Activated CD4-positive, alpha-beta memory T cell treated with anti-CD3 and anti-CD28 coated beads for 36 hours (primary cell): ENCODE measurements at regions of chr14 and their contacts with region 1.

Region 1: GRCh38 chr14:102316743-102317563 is 2.6 kb upstream of the ZNF839 start:
- DNase-seq: peak; percentile 98
- H3K4me3 Mint-ChIP-seq: peak overlapping the region; percentile 87
- H3K27ac Mint-ChIP-seq: peak overlapping the region; percentile 87
- H3K4me1 Mint-ChIP-seq: peaks cover 54% of the 10 kb centered on the region
- H3K27me3 Mint-ChIP-seq: no peaks in the 10 kb centered on the region

Region 2: GRCh38 chr14:101707068-101707842 is 609.7 kb before region 1 on chr14:
- CTCF ChIA-PET with region 1: interaction called, 4 read pairs
- POLR2A ChIA-PET with region 1: no interaction called
- intact Hi-C with region 1: loop called (anchors 5 kb)
- DNase-seq: peak; percentile 65
- H3K4me3 Mint-ChIP-seq: peak overlapping the region; percentile 51
- H3K27ac Mint-ChIP-seq: peak overlapping the region; percentile 84
- H3K4me1 Mint-ChIP-seq: peaks cover 30% of the 10 kb centered on the region
- H3K27me3 Mint-ChIP-seq: no peaks in the 10 kb centered on the region

Region 3: DNA sequence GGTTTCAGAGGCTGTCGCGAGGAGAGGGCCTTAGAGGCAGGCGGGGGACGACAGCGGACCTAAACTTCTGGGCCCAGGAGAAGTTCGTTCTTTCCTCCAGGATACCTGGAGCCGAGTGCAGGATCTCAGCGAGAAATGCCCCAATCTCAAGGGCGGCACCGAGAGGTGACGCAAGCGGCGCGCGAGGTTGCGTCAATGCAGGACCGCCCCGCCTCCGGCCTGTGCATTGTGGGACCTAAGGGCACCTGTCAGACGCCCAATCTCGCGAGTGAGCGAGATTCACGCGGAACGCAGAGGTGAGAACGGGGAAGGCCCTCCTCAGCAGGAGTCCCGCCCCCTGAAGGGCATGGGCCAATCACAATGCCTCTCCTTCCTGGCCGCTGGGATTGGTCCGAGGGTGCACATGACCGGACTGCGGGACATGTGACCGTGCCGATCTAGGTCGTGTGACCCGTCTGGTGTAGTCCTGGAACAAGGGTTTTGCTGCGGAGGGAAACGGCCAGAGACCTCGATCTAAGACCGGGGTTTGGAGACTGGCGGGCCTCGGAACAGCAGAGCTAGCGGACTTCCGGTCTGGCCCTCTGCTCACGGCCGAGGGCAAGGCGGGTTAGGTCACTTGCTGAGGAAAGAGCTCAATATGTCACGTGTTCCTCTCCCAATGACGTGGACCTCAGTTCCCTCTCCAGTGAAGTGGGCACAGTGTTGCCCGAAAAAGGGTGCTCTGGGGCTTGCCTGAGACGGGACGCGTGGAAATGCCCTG is 368.9 kb before region 1 on chr14:
- CTCF ChIA-PET with region 1: no interaction called
- POLR2A ChIA-PET with region 1: no interaction called
- intact Hi-C with region 1: loop called (anchors 1 kb)
- DNase-seq: peak; percentile 100
- H3K4me3 Mint-ChIP-seq: peak overlapping the region; percentile 92
- H3K27ac Mint-ChIP-seq: peak overlapping the region; percentile 95
- H3K4me1 Mint-ChIP-seq: peaks cover 15% of the 10 kb centered on the region
- H3K27me3 Mint-ChIP-seq: peaks cover 20% of the 10 kb centered on the region

Region 4: GRCh38 chr14:102086972-102087761 is 229.8 kb before region 1 on chr14 and contains the start of gene HSP90AA1:
- CTCF ChIA-PET with region 1: interaction called, 6 read pairs
- POLR2A ChIA-PET with region 1: no interaction called
- intact Hi-C with region 1: loop called (anchors 2 kb)
- DNase-seq: peak; percentile 96
- H3K4me3 Mint-ChIP-seq: peak within 1 kb of the TSS; percentile 84
- H3K27ac Mint-ChIP-seq: peak within 1 kb of the TSS; percentile 94
- H3K4me1 Mint-ChIP-seq: peaks cover 43% of the 10 kb centered on the region
- H3K27me3 Mint-ChIP-seq: no peaks in the 10 kb centered on the region
- total RNA-seq, gene HSP90AA1: 1,107 to 1,148 TPM

Region 5: DNA sequence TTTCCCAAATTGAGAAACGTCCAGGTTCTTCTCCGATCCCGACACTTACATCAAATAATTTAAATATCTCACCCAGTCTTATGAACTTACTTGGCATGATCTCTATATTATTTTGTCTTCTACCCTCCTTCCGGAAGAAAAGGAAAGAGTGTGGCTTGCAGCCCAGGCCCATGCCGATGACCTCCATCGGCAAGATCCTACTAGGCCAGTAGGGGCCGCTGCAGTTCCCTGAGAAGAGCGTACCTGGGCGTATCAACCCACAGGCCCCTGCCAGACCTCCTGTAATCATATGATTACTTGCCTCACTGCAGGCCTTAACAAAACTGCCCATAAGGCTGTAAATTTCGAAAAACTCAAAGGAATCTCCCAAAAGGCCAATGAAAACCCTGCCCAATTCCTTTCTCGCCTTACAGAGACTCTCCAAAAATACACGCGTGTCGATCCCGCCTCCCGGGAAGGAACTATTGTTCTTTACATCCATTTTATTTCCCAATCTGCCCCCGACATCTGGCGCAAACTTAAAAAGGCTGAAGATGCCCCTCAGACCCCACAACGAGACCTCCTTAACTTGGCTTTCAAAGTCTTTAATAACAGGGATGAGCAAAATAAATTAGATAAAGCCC is 81.6 kb before region 1 on chr14:
- CTCF ChIA-PET with region 1: interaction called, 16 read pairs
- POLR2A ChIA-PET with region 1: no interaction called
- intact Hi-C with region 1: loop called (anchors 1 kb)
- DNase-seq: peak; percentile 87
- H3K4me3 Mint-ChIP-seq: no peak overlapping the region
- H3K27ac Mint-ChIP-seq: no peak overlapping the region
- H3K4me1 Mint-ChIP-seq: no peaks in the 10 kb centered on the region
- H3K27me3 Mint-ChIP-seq: no peaks in the 10 kb centered on the region

Region 6: GRCh38 chr14:102333795-102334705 is 17.1 kb after region 1 on chr14:
- CTCF ChIA-PET with region 1: no interaction called
- POLR2A ChIA-PET with region 1: no interaction called
- intact Hi-C with region 1: no loop called
- DNase-seq: no peak
- H3K4me3 Mint-ChIP-seq: no peak overlapping the region
- H3K27ac Mint-ChIP-seq: no peak overlapping the region
- H3K4me1 Mint-ChIP-seq: peaks cover 2% of the 10 kb centered on the region
- H3K27me3 Mint-ChIP-seq: no peaks in the 10 kb centered on the region

Region 7: DNA sequence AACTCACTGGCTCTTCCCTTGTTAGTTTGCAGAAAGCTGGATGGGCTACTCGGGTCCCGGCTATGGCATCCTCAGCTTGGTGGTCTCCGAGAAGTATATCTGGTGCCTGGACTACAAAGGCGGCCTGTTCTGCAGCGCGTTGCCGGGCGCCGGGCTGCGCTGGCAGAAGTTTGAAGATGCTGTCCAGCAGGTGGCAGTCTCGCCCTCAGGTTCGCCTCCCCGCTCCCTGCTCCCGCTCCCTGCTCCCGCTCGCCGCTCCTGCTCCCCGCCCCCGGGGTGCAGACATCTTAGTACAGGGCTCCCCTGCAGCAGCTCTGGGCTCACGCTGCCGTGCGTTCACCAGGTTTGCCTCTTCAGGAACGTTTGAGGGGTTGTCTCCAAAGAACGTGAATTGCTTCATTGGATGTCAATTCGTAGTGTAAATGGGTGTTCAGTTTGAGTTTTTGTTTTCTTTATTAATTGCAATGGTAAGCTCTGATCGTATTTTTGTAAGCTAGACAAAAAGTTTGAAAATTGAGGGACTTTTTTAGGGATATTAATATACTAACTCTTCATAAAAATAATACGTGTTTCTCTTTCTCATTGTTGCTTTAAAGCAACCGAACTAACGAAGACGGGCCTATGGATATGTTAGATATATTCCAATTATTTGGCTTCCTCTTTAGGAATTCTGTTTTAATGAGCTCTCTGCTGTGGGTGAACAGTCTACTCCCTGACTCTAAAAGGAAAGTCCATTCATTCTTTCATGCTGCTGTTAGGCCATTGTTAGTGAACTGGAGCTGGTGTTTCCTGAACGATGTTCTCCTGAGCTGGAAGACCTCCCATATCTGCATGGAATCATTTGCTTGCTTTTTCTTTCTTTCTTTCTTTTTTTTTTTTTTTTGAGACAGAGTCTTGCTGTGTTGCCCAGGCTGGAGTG is 121.3 kb after region 1 on chr14:
- CTCF ChIA-PET with region 1: no interaction called
- POLR2A ChIA-PET with region 1: no interaction called
- intact Hi-C with region 1: loop called (anchors 5 kb)
- DNase-seq: peak; percentile 73
- H3K4me3 Mint-ChIP-seq: no peak overlapping the region
- H3K27ac Mint-ChIP-seq: no peak overlapping the region
- H3K4me1 Mint-ChIP-seq: no peaks in the 10 kb centered on the region
- H3K27me3 Mint-ChIP-seq: no peaks in the 10 kb centered on the region